Mammary epithelial cell (primary cell): ENCODE measurements at regions of chr7 and their contacts with region 1.

Region 1: GRCh38 chr7:152145853-152146466 is 120.5 kb downstream of the GALNT11 start:
- DNase-seq: peak; percentile 51
- H3K4me3 ChIP-seq: no peak overlapping the region
- H3K27ac ChIP-seq: no peak overlapping the region
- H3K4me1 ChIP-seq: no peaks in the 10 kb centered on the region
- H3K27me3 ChIP-seq: no peaks in the 10 kb centered on the region
- CTCF ChIP-seq: peak; percentile 52 to 73

Region 2: DNA sequence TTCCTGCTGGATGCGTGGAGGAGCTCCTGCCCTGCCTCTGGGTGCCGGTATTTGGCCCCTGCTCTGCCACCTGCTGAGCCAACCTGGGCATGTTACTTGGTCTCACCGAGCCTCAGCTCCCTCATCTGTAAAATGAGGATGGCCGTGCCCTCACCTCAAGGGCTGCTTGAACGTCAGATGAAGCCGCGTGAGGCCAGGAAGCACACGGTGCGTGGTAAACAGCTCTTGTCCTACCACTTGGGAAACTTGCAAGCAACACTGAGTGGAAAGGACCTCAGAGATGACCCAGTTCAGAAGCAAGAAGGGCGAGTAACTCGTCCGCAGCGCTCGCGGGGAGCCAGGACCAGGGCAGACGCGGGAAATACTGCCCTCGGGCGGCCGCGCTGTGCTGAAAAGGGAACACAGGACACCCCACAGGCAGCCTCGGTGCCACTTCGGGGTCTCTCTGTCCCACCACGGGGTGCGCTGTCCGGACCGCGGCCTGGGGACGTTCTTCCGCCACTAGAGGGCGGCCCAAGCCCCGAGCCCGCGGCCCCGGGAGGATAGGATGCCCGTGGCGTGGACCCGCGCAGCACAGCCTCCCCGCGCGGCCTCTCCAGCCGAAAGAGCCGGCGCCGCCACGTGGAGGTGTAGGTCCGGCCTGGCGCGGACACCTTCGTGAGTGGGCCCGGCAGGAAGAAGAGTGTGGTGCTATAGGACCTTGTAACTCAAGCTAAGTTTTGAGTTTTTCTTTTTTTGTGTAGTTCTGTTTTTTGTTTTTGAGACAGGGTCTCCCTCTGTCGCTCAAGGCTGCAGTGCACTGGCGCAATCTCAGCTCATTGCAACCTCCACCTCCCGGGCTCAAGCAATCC is 363.1 kb before region 1 on chr7:
- CTCF ChIA-PET with region 1: no interaction called
- dilution Hi-C with region 1: no loop called
- in situ Hi-C with region 1: no loop called
- intact Hi-C with region 1: loop called (anchors 1 kb)
- DNase-seq: peak; percentile 38
- H3K4me3 ChIP-seq: peak overlapping the region; percentile 12 to 32 (median 31)
- H3K27ac ChIP-seq: no peak overlapping the region
- H3K4me1 ChIP-seq: peaks cover 9% of the 10 kb centered on the region
- H3K27me3 ChIP-seq: no peaks in the 10 kb centered on the region
- CTCF ChIP-seq: peak; percentile 69 to 89

Region 3: GRCh38 chr7:151936207-151936606 is 209.8 kb before region 1 on chr7:
- CTCF ChIA-PET with region 1: no interaction called
- dilution Hi-C with region 1: no loop called
- in situ Hi-C with region 1: no loop called
- intact Hi-C with region 1: loop called (anchors 1 kb)
- DNase-seq: no peak
- H3K4me3 ChIP-seq: no peak overlapping the region
- H3K27ac ChIP-seq: no peak overlapping the region
- H3K4me1 ChIP-seq: peaks cover 16% of the 10 kb centered on the region
- H3K27me3 ChIP-seq: no peaks in the 10 kb centered on the region
- CTCF ChIP-seq: no peak

Region 4: DNA sequence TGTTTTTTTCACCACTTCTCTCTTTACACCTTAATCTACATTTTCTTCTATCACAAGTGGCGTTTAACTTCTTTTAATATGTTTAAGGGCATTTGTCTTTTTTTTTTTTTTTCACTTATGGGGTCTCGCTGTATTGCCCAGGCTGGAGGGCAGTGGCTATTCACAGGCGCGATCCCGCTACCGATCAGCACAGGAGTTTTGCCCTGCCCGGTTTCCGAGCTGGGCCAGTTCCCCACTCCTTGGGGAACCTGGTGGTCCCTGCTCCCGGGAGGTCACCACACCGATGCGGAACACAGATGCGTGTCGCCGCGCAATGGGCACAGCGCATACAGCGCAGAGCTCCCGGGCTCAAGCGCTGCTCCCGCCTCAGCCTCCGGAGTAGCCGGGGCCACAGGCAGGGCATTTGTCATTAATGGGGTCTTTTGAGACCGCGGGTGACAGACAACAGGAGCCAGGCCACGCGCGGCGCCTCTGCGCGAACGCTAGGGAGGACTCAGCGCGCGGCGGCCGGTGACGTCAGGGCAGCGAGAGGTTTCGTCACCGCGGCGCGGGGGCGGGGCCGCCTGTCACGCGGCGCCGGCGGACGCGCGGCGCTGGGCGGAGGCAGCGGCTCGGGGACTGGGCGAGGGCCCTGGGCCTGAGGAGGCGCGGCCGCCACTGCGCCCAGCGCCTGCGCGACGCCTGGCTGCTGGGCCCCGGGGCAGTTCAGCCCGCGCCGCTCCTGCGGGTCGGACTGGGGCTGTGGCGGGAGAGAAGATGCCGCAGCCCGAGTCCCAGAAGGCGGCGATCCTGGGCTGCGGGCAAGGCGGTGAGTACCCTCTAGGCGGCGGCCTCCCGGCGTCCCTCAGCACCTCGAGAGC is 120.7 kb before region 1 on chr7 and contains the start of gene GALNT11:
- CTCF ChIA-PET with region 1: no interaction called
- dilution Hi-C with region 1: no loop called
- in situ Hi-C with region 1: no loop called
- intact Hi-C with region 1: loop called (anchors 10 kb)
- DNase-seq: peak; percentile 79
- H3K4me3 ChIP-seq: peak within 1 kb of the TSS; percentile 80 to 89 (median 84)
- H3K27ac ChIP-seq: peak within 1 kb of the TSS; percentile 75
- H3K4me1 ChIP-seq: peaks cover 5% of the 10 kb centered on the region
- H3K27me3 ChIP-seq: no peaks in the 10 kb centered on the region
- CTCF ChIP-seq: peak in 1 of 2 donors; percentile 41
- total RNA-seq, gene GALNT11: 28.4 to 49.2 TPM

Region 5: GRCh38 chr7:152108359-152108758 is 37.6 kb before region 1 on chr7:
- CTCF ChIA-PET with region 1: no interaction called
- dilution Hi-C with region 1: no loop called
- in situ Hi-C with region 1: no loop called
- intact Hi-C with region 1: no loop called
- DNase-seq: no peak
- H3K4me3 ChIP-seq: no peak overlapping the region
- H3K27ac ChIP-seq: no peak overlapping the region
- H3K4me1 ChIP-seq: no peaks in the 10 kb centered on the region
- H3K27me3 ChIP-seq: no peaks in the 10 kb centered on the region
- CTCF ChIP-seq: no peak

Region 6: DNA sequence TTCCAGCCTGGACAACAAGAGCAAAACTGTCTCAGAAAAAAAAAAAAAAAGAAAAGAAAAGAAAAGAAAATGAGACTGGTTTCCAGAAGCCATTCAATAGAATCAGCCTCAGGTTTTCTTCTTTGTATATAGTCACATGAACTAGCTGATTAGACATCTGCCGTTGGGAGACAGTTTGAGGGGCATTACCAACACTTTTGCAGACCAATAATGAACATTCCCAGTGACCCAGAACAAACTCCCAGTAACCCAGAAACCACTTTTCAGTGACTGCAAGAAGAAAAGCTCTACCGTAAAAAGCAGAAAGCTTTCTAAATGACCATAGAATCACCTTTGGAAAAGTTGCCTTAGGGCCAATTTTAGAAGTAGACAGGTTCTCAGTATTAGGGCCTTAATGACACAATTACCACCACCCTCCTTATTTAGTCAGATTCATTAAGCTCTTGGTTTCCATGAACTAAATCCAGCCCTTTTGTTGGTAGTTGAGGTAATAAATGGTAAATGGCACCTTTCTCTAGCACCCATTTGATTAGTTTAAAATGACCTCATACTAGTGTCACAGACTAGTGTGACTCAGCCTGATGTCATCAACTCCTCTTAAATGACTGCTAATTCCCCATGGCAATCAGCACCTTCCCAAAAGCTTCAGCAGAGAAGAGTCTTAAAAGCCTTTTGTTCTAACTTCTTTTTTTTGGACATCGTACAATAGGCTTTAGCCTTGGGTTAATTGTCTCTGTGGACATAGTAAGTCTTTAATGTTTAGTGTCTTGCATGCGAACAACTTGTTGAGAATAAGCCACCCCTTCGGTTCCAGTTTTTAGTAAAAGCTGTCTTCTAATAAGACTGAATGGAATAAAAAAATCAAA is 563.6 kb after region 1 on chr7:
- CTCF ChIA-PET with region 1: no interaction called
- dilution Hi-C with region 1: no loop called
- in situ Hi-C with region 1: no loop called
- intact Hi-C with region 1: loop called (anchors 2 kb)
- DNase-seq: peak; percentile 64
- H3K4me3 ChIP-seq: no peak overlapping the region
- H3K27ac ChIP-seq: no peak overlapping the region
- H3K4me1 ChIP-seq: no peaks in the 10 kb centered on the region
- H3K27me3 ChIP-seq: no peaks in the 10 kb centered on the region
- CTCF ChIP-seq: no peak